ENCODE measurements at regions of chr12 and their contacts with region 1.

Region 1: GRCh38 chr12:48165094-48165981 is 8.0 kb upstream of the ASB8 start:
- DNase-seq: peak; percentile 52
- ATAC-seq: peak; percentile 87; the same call in 1 of the 2 replicates
- H3K4me3 ChIP-seq: no peak overlapping the region
- H3K27ac ChIP-seq: no peak overlapping the region
- H3K4me1 ChIP-seq: no peaks in the 10 kb centered on the region
- H3K27me3 ChIP-seq: peaks cover 2% of the 10 kb centered on the region; the same call in 1 of the 2 replicates
- CTCF ChIP-seq: peak; percentile 86; the same call in 1 of the 2 replicates

Region 2: GRCh38 chr12:48084066-48084465 is 81.3 kb before region 1 on chr12:
- CTCF ChIA-PET with region 1: interaction called, 3 read pairs
- POLR2A ChIA-PET with region 1: no interaction called
- in situ Hi-C with region 1: no loop called
- intact Hi-C with region 1: loop called (anchors 10 kb)
- DNase-seq: no peak
- ATAC-seq: no peak
- H3K4me3 ChIP-seq: no peak overlapping the region
- H3K27ac ChIP-seq: no peak overlapping the region
- H3K4me1 ChIP-seq: no peaks in the 10 kb centered on the region
- H3K27me3 ChIP-seq: no peaks in the 10 kb centered on the region
- CTCF ChIP-seq: no peak; the same call in 1 of the 2 replicates

Region 3: GRCh38 chr12:49264738-49265515 is 1099.6 kb after region 1 on chr12 and contains the start of gene TUBA1C:
- CTCF ChIA-PET with region 1: no interaction called
- POLR2A ChIA-PET with region 1: no interaction called
- in situ Hi-C with region 1: no loop called
- intact Hi-C with region 1: no loop called
- DNase-seq: peak; percentile 72
- ATAC-seq: peak; percentile 91
- H3K4me3 ChIP-seq: peak within 1 kb of the TSS; percentile 87 to 91
- H3K27ac ChIP-seq: peak within 1 kb of the TSS; percentile 97
- H3K4me1 ChIP-seq: peaks cover 21% of the 10 kb centered on the region
- H3K27me3 ChIP-seq: no peaks in the 10 kb centered on the region
- CTCF ChIP-seq: no peak
- total RNA-seq, gene TUBA1C: 524 TPM